Kidney (tissue), 22 donors: ENCODE measurements at regions of chr17 and their contacts with region 1.

Region 1: GRCh38 chr17:10836966-10837590 is 809 bp downstream of the PIRT start:
- DNase-seq: no peak
- H3K4me3 ChIP-seq: no peak overlapping the region
- H3K27ac ChIP-seq: no peak overlapping the region
- H3K4me1 ChIP-seq: no peaks in the 10 kb centered on the region
- H3K27me3 ChIP-seq: no peaks in the 10 kb centered on the region
- CTCF ChIP-seq: no peak

Region 2: DNA sequence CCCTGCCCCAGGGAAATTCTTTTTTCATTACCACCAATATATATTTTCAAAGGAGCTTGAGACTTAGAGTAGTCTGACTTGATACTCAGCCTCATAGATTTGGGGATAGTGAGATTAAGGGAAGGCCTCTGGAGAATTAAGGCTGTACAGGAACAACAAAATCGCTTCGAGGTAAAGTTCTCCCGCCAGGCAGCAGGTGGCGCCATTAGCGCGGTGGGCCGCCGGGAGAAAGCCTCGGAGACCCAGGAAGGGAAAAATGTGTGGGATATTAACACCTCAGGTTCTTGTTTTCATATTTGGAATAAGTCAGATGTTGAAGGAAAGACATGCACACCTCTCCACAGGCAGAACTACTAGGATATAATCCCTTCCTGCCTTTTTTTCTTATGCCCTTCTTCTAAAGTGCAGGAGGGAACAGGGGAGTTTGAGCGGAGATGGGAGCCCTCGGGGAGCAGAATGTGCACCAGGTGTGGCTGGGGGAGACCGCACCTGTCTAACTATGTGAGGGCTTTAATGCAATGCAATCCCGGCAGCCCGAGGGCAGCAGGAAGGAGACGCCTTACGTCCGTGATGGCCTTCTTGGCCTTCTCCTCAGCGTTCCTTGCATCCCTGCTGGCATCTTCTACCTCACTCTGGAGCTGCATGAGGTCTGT is 205.9 kb before region 1 on chr17:
- intact Hi-C with region 1: no loop called
- DNase-seq: peak in 1 of 5 donors; percentile 27
- H3K4me3 ChIP-seq: no peak overlapping the region
- H3K27ac ChIP-seq: no peak overlapping the region
- H3K4me1 ChIP-seq: no peaks in the 10 kb centered on the region
- H3K27me3 ChIP-seq: no peaks in the 10 kb centered on the region
- CTCF ChIP-seq: peak; percentile 53

Region 3: GRCh38 chr17:10743316-10744009 is 93.6 kb before region 1 on chr17:
- intact Hi-C with region 1: loop called (anchors 10 kb)
- DNase-seq: no peak
- H3K4me3 ChIP-seq: no peak overlapping the region
- H3K27ac ChIP-seq: no peak overlapping the region
- H3K4me1 ChIP-seq: no peaks in the 10 kb centered on the region
- H3K27me3 ChIP-seq: no peaks in the 10 kb centered on the region
- CTCF ChIP-seq: no peak